GM12878 (cell line): ENCODE measurements at regions of chr2 and their contacts with region 1.

Region 1: DNA sequence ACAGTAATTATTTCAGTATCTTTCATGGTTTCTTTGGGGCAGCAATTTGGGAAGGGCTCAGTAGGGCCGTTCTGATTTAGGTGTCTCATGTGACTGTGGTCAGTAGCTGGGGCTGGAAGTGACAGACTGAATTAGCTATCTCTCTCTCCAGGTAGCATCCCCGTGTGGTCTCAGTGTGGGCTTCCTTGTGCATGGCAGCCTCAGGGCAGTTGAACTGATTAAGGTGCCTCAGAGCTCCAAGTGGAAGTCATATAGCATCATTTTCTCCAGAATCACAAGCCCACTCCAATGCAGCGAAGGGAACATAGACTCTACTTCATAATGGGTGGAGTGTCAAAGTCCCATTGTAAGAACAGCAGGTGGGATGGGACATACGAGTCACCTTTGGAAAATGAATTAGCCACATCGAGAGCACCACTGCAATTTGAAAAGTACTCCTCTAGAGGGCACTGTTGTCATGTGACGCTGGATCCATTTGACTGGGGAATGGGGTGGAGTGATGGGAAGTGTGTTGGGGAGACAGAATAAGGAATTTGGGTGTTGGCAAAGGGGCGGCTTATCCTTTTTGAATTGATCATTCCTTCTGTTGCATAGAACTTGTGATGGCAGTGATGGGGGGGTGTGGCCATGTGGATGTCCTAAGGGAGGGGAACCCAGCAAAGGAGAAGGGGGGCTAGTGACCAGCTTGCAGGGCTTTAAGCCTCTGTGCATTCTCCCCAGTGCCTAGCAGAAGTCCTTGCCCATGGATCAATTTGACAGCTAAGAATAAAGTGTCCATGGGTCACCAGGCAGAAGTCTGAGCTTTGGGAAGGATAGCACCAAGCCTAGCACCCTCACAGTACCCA is 39.3 kb upstream of the FAM136A start:
- DNase-seq: no peak
- ATAC-seq: peak; percentile 83
- H3K4me3 ChIP-seq: no peak overlapping the region
- H3K27ac ChIP-seq: no peak overlapping the region
- H3K4me1 ChIP-seq: no peaks in the 10 kb centered on the region
- H3K27me3 ChIP-seq: no peaks in the 10 kb centered on the region
- CTCF ChIP-seq: peak; percentile 71 to 79 (median 77)
- EP300 ChIP-seq: no peak
- POLR2A ChIP-seq: no peak
- RAD21 ChIP-seq: peak; percentile 94

Region 2: DNA sequence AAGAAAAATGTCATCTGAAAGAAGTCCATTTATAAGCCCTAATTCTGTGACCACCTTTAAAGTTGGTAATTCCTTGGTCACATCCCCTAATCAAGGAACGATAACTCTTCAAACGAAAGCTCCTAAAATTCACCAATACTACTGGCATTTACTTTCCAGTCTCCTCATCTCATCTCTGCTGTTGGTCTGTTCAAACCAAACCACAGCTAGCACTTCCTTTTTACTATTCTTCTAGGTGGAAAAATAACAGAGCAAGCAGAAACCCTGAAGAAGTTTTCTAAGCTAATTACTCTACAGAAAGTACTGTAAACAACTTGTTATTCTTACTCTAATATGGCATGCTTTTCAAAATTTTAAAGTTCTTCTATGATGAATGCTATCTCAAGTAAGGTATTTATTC is 114.4 kb before region 1 on chr2:
- CTCF ChIA-PET with region 1: no interaction called
- POLR2A ChIA-PET with region 1: no interaction called
- RAD21 ChIA-PET with region 1: no interaction called
- SMC1A ChIA-PET with region 1: no interaction called
- in situ Hi-C with region 1: no loop called
- intact Hi-C with region 1: no loop called
- DNase-seq: no peak
- ATAC-seq: no peak
- H3K4me3 ChIP-seq: no peak overlapping the region
- H3K27ac ChIP-seq: no peak overlapping the region
- H3K4me1 ChIP-seq: no peaks in the 10 kb centered on the region
- H3K27me3 ChIP-seq: no peaks in the 10 kb centered on the region
- CTCF ChIP-seq: no peak
- EP300 ChIP-seq: no peak
- POLR2A ChIP-seq: no peak
- RAD21 ChIP-seq: no peak

Region 3: DNA sequence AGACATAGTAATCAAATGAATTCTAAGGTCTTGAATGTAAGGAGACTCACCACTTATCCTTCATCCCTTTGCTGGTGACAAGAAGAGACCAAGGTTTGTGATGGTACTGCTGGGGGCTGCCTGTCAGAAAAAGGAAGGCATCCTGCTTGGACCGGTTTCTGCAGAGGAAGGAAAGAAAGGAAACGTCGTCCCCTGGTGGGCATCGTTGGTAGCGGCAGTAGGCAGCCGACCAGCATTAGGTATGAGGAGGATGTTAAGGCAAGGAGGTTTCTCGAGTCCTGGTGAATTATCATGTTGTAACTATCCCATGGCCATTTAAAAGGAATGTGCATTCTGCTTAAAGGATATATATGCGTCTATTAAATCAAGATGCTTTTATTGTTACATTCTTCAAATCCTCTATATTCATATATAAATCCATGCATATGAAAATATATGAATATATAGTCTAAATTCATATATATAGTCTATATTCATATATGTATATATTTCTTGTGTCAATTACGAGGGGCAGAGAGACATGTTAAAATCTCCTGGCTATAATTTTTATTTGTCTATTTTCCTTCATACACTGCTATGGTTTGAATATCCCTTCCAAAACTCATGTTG is 306.8 kb after region 1 on chr2:
- CTCF ChIA-PET with region 1: interaction called, 15 read pairs
- POLR2A ChIA-PET with region 1: no interaction called
- RAD21 ChIA-PET with region 1: interaction called, 4 read pairs
- SMC1A ChIA-PET with region 1: interaction called, 3 read pairs
- in situ Hi-C with region 1: no loop called
- intact Hi-C with region 1: loop called (anchors 2 kb)
- DNase-seq: no peak
- ATAC-seq: peak; percentile 88
- H3K4me3 ChIP-seq: no peak overlapping the region
- H3K27ac ChIP-seq: no peak overlapping the region
- H3K4me1 ChIP-seq: no peaks in the 10 kb centered on the region
- H3K27me3 ChIP-seq: no peaks in the 10 kb centered on the region; a peak in 1 of 4 replicates
- CTCF ChIP-seq: peak; percentile 94 to 100 (median 98); a peak in 5 of 6 replicates
- EP300 ChIP-seq: no peak
- POLR2A ChIP-seq: no peak
- RAD21 ChIP-seq: peak; percentile 82